Ovary (tissue), 10 donors: ENCODE measurements at regions of chr14 and their contacts with region 1.

Region 1: GRCh38 chr14:88346048-88346639 is 23.1 kb upstream of the KCNK10 start:
- DNase-seq: no peak
- H3K4me3 ChIP-seq: no peak overlapping the region
- H3K27ac ChIP-seq: no peak overlapping the region
- H3K4me1 ChIP-seq: no peaks in the 10 kb centered on the region
- H3K27me3 ChIP-seq: no peaks in the 10 kb centered on the region
- CTCF ChIP-seq: no peak
- EP300 ChIP-seq: no peak
- POLR2A ChIP-seq: no peak

Region 2: GRCh38 chr14:88049936-88050335 is 296.2 kb before region 1 on chr14:
- intact Hi-C with region 1: loop called in 1 of 4 experiments (anchors 5 kb)
- DNase-seq: no peak
- H3K4me3 ChIP-seq: no peak overlapping the region
- H3K27ac ChIP-seq: no peak overlapping the region
- H3K4me1 ChIP-seq: no peaks in the 10 kb centered on the region
- H3K27me3 ChIP-seq: no peaks in the 10 kb centered on the region
- CTCF ChIP-seq: no peak
- EP300 ChIP-seq: no peak
- POLR2A ChIP-seq: no peak